ENCODE measurements at regions of chr6 and their contacts with region 1.

Region 1: DNA sequence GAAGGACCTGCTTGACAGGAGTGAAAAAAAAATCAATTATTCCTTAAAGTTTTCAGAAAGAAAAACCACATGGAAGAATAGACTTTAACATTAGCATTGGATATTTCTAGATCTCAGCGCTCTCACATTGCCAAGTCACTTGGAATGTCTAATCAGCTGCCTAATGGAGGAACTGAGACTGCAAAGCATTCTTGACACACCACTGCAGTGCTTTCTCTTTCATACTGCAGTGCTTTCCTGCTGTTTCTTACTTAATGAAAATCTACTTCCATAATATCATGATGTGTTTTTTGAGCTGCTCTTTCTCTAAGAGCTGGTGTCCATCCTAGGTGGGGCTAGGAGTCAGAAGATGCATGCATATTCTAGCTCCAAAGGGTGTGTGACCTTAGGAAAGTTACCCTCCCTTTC is 20.4 kb upstream of the MCM3 start:
- DNase-seq: peak; percentile 73
- ATAC-seq: peak; percentile 44
- H3K4me3 ChIP-seq: peak overlapping the region in 4 of 5 experiments; percentile 0 to 44 (median 20)
- H3K4me3 Mint-ChIP-seq: peak overlapping the region; percentile 80
- H3K27ac ChIP-seq: peak overlapping the region; percentile 92 to 94
- H3K27ac Mint-ChIP-seq: peak overlapping the region; percentile 93
- H3K4me1 ChIP-seq: peaks cover 59 to 65% of the 10 kb centered on the region in 2 donors
- H3K4me1 Mint-ChIP-seq: peaks cover 62% of the 10 kb centered on the region
- H3K27me3 ChIP-seq: no peaks in the 10 kb centered on the region
- H3K27me3 Mint-ChIP-seq: no peaks in the 10 kb centered on the region
- CTCF ChIP-seq: no peak

Region 2: GRCh38 chr6:52352239-52353008 is 47.4 kb after region 1 on chr6:
- CTCF ChIA-PET with region 1: interaction called, 6 read pairs
- POLR2A ChIA-PET with region 1: no interaction called
- intact Hi-C with region 1: loop called (anchors 2 kb)
- DNase-seq: peak; percentile 61
- ATAC-seq: peak; percentile 67
- H3K4me3 ChIP-seq: no peak overlapping the region
- H3K4me3 Mint-ChIP-seq: peak overlapping the region; percentile 9
- H3K27ac ChIP-seq: peak overlapping the region; percentile 20 to 61
- H3K27ac Mint-ChIP-seq: peak overlapping the region; percentile 68
- H3K4me1 ChIP-seq: peaks cover 26 to 35% of the 10 kb centered on the region in 2 donors
- H3K4me1 Mint-ChIP-seq: peaks cover 29% of the 10 kb centered on the region
- H3K27me3 ChIP-seq: no peaks in the 10 kb centered on the region
- H3K27me3 Mint-ChIP-seq: no peaks in the 10 kb centered on the region
- CTCF ChIP-seq: no peak

Region 3: GRCh38 chr6:52361945-52362442 is 57.0 kb after region 1 on chr6 and contains the start of gene PAQR8:
- CTCF ChIA-PET with region 1: interaction called, 5 read pairs
- POLR2A ChIA-PET with region 1: interaction called, 4 read pairs
- intact Hi-C with region 1: loop called (anchors 1 kb)
- DNase-seq: peak; percentile 88
- ATAC-seq: peak; percentile 90
- H3K4me3 ChIP-seq: peak within 1 kb of the TSS; percentile 54 to 100 (median 91)
- H3K4me3 Mint-ChIP-seq: peak within 1 kb of the TSS; percentile 96
- H3K27ac ChIP-seq: peak within 1 kb of the TSS; percentile 76 to 86
- H3K27ac Mint-ChIP-seq: peak within 1 kb of the TSS; percentile 92
- H3K4me1 ChIP-seq: peaks cover 14 to 17% of the 10 kb centered on the region in 2 donors
- H3K4me1 Mint-ChIP-seq: peaks cover 24% of the 10 kb centered on the region
- H3K27me3 ChIP-seq: no peaks in the 10 kb centered on the region
- H3K27me3 Mint-ChIP-seq: no peaks in the 10 kb centered on the region
- CTCF ChIP-seq: peak; percentile 5
- total RNA-seq, gene PAQR8: 8.5 and 8.9 TPM in 2 replicates

Region 4: DNA sequence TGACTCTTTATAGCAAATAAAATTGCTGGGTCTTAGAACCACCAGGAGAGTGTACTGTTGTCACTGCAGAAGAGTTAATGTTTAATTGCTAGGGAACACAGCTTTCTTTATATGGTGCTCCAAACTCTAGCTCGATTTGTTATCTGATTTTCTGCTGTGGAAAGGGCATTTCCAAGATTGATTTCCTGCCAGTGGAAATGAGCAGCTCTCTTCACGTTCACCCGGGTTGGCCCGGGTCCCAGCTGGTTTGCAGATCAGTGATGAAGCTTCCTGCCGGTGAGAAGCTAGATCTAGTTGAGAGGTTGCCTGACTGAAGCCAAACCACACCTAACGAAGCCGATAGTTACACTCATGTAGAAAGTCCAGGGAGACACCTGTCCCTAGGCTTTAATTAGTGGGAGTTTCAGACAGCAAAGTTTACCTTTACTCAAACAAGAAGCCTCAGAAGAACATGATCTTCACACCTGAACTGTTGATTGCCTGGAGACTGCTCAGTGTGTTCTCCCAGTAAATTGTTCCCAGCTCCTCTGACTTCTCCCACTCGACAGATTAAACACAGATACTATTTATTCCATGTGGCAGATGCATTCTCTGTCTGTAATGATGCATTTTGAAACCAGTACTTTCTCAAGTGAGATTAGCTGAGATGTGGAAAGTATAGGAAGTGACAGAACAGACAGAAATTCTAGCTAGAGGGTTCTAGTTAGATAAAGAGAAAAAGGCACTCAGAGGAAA is 84.8 kb after region 1 on chr6:
- CTCF ChIA-PET with region 1: no interaction called
- POLR2A ChIA-PET with region 1: no interaction called
- intact Hi-C with region 1: loop called (anchors 5 kb)
- DNase-seq: peak; percentile 19
- ATAC-seq: peak; percentile 35
- H3K4me3 ChIP-seq: peak overlapping the region in 3 of 5 experiments; percentile 5 to 46 (median 21)
- H3K4me3 Mint-ChIP-seq: peak overlapping the region; percentile 66
- H3K27ac ChIP-seq: peak overlapping the region in 1 of 2 donors; percentile 24
- H3K27ac Mint-ChIP-seq: peak overlapping the region; percentile 79
- H3K4me1 ChIP-seq: peaks cover 16 to 23% of the 10 kb centered on the region in 2 donors
- H3K4me1 Mint-ChIP-seq: peaks cover 40% of the 10 kb centered on the region
- H3K27me3 ChIP-seq: no peaks in the 10 kb centered on the region
- H3K27me3 Mint-ChIP-seq: no peaks in the 10 kb centered on the region
- CTCF ChIP-seq: no peak

Region 5: DNA sequence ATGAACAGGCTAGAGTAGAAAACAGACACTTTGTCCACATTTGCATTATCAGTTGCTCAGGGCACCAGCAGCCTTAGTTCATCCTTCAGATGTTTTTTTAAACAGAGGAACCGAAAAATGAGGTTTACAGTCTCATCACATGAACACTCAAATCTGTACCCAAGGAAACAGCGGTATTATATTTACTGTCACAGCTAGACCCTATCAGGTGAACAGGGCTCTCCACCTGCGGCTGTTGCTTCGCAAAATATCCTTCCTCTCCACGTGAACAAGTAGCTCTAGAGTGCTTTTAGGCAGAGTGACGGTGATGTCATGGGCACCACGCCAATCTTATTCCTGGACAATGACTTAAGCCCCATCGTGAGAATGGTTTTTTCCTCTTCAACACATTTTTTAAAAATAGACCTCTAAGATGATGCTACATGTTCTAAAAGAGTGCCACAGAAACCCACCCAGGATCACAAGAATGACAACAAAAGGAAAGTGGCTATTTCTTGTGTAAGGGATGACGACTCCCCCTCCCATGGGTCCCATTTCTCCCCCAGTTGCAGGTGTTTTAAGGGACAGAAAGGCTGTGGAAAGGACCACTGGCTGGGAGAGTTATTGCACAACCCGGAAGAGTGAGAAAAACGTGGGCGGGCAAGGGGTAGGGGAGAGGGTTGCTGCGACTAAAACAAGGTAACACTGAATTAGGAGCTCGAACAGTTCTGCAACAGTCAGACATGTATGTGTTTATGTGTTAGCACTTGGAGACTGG is 192.8 kb after region 1 on chr6:
- CTCF ChIA-PET with region 1: no interaction called
- POLR2A ChIA-PET with region 1: no interaction called
- intact Hi-C with region 1: loop called (anchors 2 kb)
- DNase-seq: peak; percentile 89
- ATAC-seq: peak; percentile 79
- H3K4me3 ChIP-seq: peak overlapping the region in 3 of 5 experiments; percentile 3 to 19 (median 7)
- H3K4me3 Mint-ChIP-seq: peak overlapping the region; percentile 76
- H3K27ac ChIP-seq: peak overlapping the region; percentile 96 to 99
- H3K27ac Mint-ChIP-seq: peak overlapping the region; percentile 96
- H3K4me1 ChIP-seq: peaks cover 43 to 61% of the 10 kb centered on the region in 2 donors
- H3K4me1 Mint-ChIP-seq: peaks cover 66% of the 10 kb centered on the region
- H3K27me3 ChIP-seq: no peaks in the 10 kb centered on the region
- H3K27me3 Mint-ChIP-seq: no peaks in the 10 kb centered on the region
- CTCF ChIP-seq: no peak